Right ventricle myocardium superior (tissue), 1 donor: ENCODE measurements at regions of chr1 and their contacts with region 1.

Region 1: DNA sequence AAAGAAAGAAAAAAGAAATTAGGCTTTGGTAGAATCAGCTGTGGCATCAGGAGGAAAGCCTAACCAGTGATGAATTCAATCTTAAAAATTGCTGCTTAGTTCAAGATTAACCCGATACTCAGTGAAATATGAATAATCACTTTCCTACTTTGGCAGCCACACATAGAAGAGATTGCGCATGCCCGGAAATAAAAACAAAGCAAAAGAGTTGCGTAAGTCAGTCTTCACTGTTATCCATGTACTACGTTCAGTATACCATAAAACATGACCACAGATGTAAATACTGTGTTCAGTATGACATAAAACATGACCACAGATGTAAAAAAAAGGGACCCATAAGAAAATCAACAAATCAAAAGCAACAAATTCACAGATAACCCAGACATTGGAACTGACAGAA is 19.2 kb downstream of the CD1D start:
- DNase-seq: no peak
- ATAC-seq: no peak

Region 2: DNA sequence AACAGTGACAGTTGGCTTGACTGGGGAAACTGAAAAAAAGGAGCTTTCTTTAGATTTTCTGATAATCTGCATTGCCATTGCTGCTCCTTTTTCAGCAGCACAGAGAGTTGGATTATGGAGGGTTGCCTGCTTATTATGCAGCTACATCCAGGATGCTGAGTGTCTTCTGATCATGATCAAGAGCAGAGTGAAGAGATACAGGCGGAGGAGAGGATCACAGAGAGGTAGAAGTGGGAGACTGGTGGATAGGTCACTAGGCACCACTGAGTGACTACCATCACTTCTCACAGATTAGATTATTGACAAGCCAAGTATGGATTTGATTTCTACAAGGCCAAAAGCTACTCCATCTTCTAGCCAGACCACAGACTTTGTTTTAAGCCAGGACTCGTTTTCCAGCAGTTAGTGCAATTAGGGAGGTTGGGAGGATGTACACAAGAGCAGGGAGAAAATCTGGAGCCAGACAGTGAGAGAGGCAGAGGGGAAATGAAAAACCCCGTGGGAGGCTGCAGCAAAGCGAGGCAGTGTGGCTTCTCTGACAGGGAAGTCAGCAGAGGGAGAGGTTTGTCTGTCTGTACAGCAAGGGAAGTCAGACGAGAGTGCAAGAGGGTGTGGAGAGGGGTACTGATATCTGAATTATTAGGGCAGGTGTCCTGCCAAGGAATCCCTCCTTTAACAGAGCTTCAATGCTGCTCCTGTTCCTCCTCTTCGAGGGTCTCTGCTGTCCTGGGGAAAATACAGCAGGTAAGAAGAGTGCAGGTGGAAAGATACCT is 153.6 kb after region 1 on chr1 and contains the start of gene CD1E:
- intact Hi-C with region 1: no loop called
- DNase-seq: no peak
- ATAC-seq: no peak
- total RNA-seq, gene CD1E: not detected

Region 3: GRCh38 chr1:158998781-158999161 is 798.9 kb after region 1 on chr1:
- intact Hi-C with region 1: loop called (anchors 10 kb)
- DNase-seq: peak; percentile 70
- ATAC-seq: peak; percentile 58